Body of pancreas (tissue), 4 donors: ENCODE measurements at regions of chr12 and their contacts with region 1.

Region 1: GRCh38 chr12:71746983-71747611 is 7.6 kb upstream of the RAB21 start:
- DNase-seq: peak; percentile 45 to 62 (median 56)
- ATAC-seq: peak; percentile 99
- H3K4me3 ChIP-seq: no peak overlapping the region
- H3K27ac ChIP-seq: no peak overlapping the region
- H3K4me1 ChIP-seq: no peaks in the 10 kb centered on the region
- H3K27me3 ChIP-seq: no peaks in the 10 kb centered on the region
- CTCF ChIP-seq: peak; percentile 31 to 95 (median 87)
- POLR2A ChIP-seq: no peak

Region 2: GRCh38 chr12:71415336-71416231 is 331.5 kb before region 1 on chr12:
- intact Hi-C with region 1: loop called (anchors 10 kb)
- DNase-seq: peak in 2 of 4 donors; percentile 26 to 31
- ATAC-seq: peak; percentile 64
- H3K4me3 ChIP-seq: no peak overlapping the region
- H3K27ac ChIP-seq: no peak overlapping the region
- H3K4me1 ChIP-seq: no peaks in the 10 kb centered on the region
- H3K27me3 ChIP-seq: no peaks in the 10 kb centered on the region
- CTCF ChIP-seq: peak; percentile 34 to 69 (median 64)
- POLR2A ChIP-seq: no peak

Region 3: DNA sequence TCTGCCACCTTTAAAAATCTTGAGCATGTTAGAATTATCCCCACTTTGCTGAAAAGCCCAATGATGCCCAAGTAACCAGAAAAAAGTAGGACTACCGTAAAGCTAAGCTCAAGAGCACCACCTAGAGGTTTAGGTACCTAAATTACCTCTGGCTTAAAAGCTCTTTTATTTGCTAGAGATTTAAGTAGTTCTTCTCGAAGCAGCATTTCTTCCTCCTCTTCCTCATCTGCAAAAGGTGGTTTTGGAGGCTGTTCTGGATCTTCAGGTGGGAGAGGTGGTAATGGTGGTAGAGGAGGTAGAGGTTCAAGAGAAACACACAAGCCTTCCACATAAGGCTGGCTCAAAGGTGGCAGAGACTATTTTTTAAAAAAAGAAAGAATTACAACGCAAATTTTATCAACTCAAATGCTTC is 110.4 kb before region 1 on chr12:
- intact Hi-C with region 1: no loop called
- DNase-seq: peak in 1 of 4 donors; percentile 15
- ATAC-seq: peak; percentile 53
- H3K4me3 ChIP-seq: no peak overlapping the region
- H3K27ac ChIP-seq: no peak overlapping the region
- H3K4me1 ChIP-seq: no peaks in the 10 kb centered on the region
- H3K27me3 ChIP-seq: no peaks in the 10 kb centered on the region
- CTCF ChIP-seq: peak; percentile 40 to 68 (median 61)
- POLR2A ChIP-seq: no peak

Region 4: GRCh38 chr12:71652656-71653055 is 94.4 kb before region 1 on chr12:
- intact Hi-C with region 1: loop called (anchors 10 kb)
- DNase-seq: no peak
- ATAC-seq: no peak
- H3K4me3 ChIP-seq: no peak overlapping the region
- H3K27ac ChIP-seq: no peak overlapping the region
- H3K4me1 ChIP-seq: peaks cover 24% of the 10 kb centered on the region
- H3K27me3 ChIP-seq: no peaks in the 10 kb centered on the region
- CTCF ChIP-seq: no peak
- POLR2A ChIP-seq: no peak

Region 5: GRCh38 chr12:71888521-71888920 is 141.4 kb after region 1 on chr12:
- intact Hi-C with region 1: no loop called
- DNase-seq: no peak
- ATAC-seq: no peak
- H3K4me3 ChIP-seq: no peak overlapping the region
- H3K27ac ChIP-seq: no peak overlapping the region
- H3K4me1 ChIP-seq: no peaks in the 10 kb centered on the region
- H3K27me3 ChIP-seq: no peaks in the 10 kb centered on the region
- CTCF ChIP-seq: no peak
- POLR2A ChIP-seq: no peak